ENCODE measurements at regions of chr11 and their contacts with region 1.

Region 1: DNA sequence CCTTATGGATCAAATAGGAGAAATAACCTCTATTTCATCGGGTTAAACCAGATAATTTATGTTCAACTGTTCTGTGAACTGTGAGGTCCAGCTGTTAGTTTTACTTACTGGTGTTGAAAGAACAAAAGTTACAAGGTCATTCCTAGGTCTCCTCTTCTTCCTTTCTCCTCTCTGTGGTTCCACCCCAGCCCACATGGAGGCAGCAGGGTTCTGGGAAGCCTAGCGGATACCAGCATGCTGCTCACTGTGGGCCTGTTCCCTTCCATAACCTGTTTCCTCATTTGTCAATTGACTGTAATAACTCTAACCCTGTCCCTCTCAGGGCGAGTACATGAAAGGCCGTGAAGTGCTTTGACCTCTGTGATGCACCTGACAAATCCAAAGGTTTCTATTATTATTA is 27.8 kb downstream of the RELT start:
- DNase-seq: peak; percentile 58 to 95 (median 77)

Region 2: DNA sequence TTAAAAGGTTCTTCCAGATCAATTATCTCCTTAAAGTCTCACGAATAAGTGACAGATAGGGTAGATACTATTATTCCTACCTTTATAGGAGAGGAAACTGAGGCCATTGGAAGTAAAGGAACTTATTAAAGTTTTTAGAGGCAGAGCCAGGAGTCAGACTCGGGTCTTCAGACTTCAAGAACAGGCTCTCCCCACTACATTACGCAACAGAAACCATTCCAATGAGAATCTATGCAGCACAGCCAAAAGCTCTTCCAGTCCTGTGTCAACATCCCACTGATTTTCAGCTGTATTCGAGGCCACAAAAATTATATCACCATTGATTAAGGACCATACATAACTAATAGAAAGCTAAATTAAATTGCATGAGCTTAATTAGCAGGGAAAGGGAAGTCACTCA is 49.5 kb after region 1 on chr11:
- intact Hi-C with region 1: loop called (anchors 10 kb)
- DNase-seq: no peak

Region 3: DNA sequence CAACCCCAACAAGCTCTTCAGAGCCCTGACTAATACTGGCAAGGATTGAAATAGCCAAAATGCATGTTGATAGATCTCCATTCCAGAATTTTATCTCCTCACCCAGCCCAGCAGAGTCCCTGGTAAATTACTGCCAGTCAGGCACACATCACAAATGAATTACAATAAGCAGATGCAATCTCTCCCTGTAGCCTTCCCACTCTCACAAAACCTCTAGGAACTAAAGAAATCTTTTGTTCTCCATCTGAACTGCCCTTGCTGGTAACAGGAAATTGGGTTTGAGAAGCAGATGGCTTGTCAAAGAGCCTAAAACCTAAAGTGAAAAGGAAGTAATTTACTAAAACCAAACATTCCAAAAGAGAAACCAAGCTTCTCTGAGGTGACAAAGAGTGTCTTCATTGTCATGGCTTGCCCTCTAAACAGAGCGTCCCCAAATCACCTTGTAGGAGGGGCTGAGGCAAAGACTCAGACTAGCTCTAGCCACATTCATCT is 134.4 kb after region 1 on chr11:
- intact Hi-C with region 1: loop called (anchors 10 kb)
- DNase-seq: no peak

Region 4: GRCh38 chr11:73597956-73598718 is 194.1 kb after region 1 on chr11 and contains the start of gene FAM168A:
- intact Hi-C with region 1: loop called (anchors 5 kb)
- DNase-seq: peak; percentile 93 to 99 (median 94)

Region 5: GRCh38 chr11:73625696-73626318 is 221.8 kb after region 1 on chr11:
- intact Hi-C with region 1: loop called (anchors 10 kb)
- DNase-seq: peak; percentile 61 to 96 (median 82)

Region 6: DNA sequence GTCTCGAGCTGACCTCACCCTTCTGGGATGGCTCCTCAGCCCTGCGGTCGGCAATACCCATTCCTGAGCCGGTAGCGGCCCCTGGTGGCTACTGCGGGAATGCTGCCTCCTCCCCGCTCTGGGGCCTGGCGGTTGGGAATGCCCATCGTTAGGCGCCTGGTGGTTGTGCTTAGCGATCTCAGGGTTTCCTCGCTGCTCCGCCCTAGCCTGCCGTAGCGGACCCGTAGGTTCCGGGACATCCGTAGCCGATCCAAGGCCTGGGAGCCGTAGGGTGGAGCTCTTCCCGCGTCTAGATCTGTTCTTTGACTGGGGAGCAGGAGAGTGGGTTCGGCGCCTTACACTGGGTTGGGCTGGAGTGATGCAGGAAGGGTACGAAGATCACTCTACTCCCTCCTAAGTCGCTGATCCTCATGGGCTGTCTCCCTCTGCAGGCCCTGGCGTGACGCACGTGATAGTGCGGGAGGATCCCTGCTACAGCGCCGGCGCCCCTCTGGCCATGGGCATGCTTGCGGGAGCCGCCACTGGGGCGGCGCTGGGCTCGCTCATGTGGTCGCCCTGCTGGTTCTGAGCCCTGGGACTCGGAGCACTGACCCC is 257.1 kb after region 1 on chr11:
- intact Hi-C with region 1: loop called (anchors 5 kb)
- DNase-seq: peak; percentile 86 to 99 (median 96)

Measured in posterior cingulate gyrus (tissue), 11 donors.